MCF 10A (cell line): ENCODE measurements at regions of chr6 and their contacts with region 1.

Region 1: DNA sequence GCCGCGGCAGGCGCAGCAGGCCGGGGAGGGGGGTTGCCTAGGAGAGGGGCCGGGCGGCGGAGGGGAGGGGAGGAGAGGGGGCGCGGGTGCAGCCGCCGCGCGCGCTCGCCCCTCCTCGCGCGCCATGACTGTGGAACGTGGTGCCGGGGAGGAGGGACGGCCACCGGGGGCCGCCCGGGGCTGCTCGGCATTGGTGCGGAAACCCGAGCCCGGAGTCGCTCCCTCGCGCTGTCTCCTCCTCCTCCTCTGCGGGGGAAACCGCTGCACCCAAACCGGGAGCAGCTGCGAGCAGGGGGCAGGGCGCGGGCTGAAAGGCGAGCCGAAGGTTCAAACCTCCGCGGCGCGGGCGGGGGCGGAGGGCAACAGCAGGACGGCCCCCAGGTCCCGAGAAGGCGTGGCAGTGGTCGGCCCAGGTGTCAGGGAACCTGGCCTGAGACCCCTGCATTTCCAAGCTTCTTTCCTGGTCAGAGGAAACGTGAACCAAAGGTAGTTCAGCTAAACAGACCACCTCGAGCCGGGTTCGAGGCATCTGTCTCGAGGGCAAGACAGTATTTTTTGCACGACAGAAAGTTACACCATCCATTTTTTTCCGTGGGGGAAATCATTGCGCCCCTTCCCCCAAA is 1.4 kb upstream of the TRERF1 start:
- DNase-seq: peak; percentile 87
- H3K4me3 Mint-ChIP-seq: peak overlapping the region; percentile 91
- H3K27ac Mint-ChIP-seq: no peak overlapping the region
- H3K4me1 Mint-ChIP-seq: peaks cover 32% of the 10 kb centered on the region
- H3K27me3 Mint-ChIP-seq: no peaks in the 10 kb centered on the region
- CTCF ChIP-seq: no peak

Region 2: GRCh38 chr6:42224222-42224989 is 228.7 kb before region 1 on chr6:
- CTCF ChIA-PET with region 1: no interaction called
- POLR2A ChIA-PET with region 1: interaction called, 41 read pairs
- intact Hi-C with region 1: no loop called
- DNase-seq: peak; percentile 93
- H3K4me3 Mint-ChIP-seq: peak overlapping the region; percentile 73
- H3K27ac Mint-ChIP-seq: peak overlapping the region; percentile 92
- H3K4me1 Mint-ChIP-seq: peaks cover 44% of the 10 kb centered on the region
- H3K27me3 Mint-ChIP-seq: no peaks in the 10 kb centered on the region
- CTCF ChIP-seq: no peak

Region 3: DNA sequence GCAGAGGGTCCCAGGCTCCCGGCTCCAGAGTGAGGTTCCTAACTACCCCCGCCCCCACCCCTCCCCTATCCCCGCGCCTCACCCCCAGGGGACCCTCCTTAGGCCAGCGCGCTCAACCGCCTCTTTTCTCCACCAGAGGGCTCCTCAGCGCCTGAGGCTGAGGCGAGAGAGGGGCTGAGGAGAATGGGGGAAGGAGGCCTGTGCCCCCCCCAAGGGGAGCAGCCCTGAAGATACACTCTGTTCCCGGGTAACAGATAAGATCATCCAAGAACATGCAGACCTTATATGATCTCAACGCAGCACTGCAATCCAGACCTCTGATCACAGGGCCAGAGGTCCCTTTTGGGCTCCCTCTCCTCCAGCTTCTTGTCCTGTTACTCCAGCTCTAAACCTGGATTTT is 192.2 kb before region 1 on chr6:
- CTCF ChIA-PET with region 1: no interaction called
- POLR2A ChIA-PET with region 1: interaction called, 3 read pairs
- intact Hi-C with region 1: loop called (anchors 1 kb)
- DNase-seq: peak; percentile 26
- H3K4me3 Mint-ChIP-seq: no peak overlapping the region
- H3K27ac Mint-ChIP-seq: peak overlapping the region; percentile 70
- H3K4me1 Mint-ChIP-seq: peaks cover 9% of the 10 kb centered on the region
- H3K27me3 Mint-ChIP-seq: no peaks in the 10 kb centered on the region
- CTCF ChIP-seq: peak; percentile 70

Region 4: DNA sequence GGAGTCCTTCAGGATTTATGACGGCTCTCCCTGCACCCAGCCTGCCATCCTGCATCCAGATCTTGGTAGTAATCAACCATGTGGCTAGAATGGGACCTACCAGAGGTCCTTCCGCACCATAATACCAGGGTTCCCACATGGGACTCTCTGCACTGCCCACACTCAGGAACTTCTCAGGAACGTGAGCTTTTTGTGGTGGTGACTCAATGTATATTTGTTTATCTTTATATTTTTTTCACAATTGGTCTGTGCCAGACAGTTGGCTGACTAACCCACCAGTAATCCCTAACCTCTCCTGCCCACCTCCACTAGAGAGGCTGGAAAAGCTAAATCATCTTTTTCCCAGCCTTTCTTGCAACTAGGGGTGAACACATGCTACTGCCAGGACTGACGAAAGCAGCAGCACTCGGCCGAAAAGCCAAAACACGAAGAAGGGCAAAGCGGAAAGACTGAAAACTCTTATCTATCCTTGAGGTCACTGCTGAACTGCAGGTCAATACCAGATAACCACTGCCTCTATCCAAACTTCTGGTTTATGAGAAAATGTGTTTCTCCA is 114.4 kb before region 1 on chr6:
- CTCF ChIA-PET with region 1: no interaction called
- POLR2A ChIA-PET with region 1: interaction called, 16 read pairs
- intact Hi-C with region 1: loop called (anchors 2 kb)
- DNase-seq: peak; percentile 97
- H3K4me3 Mint-ChIP-seq: peak overlapping the region; percentile 61
- H3K27ac Mint-ChIP-seq: peak overlapping the region; percentile 55
- H3K4me1 Mint-ChIP-seq: peaks cover 52% of the 10 kb centered on the region
- H3K27me3 Mint-ChIP-seq: no peaks in the 10 kb centered on the region
- CTCF ChIP-seq: no peak

Region 5: GRCh38 chr6:42563697-42564505 is 110.8 kb after region 1 on chr6 and contains the start of gene UBR2:
- CTCF ChIA-PET with region 1: no interaction called
- POLR2A ChIA-PET with region 1: interaction called, 39 read pairs
- intact Hi-C with region 1: no loop called
- DNase-seq: peak; percentile 99
- H3K4me3 Mint-ChIP-seq: peak within 1 kb of the TSS; percentile 79
- H3K27ac Mint-ChIP-seq: peak within 1 kb of the TSS; percentile 81
- H3K4me1 Mint-ChIP-seq: peaks cover 18% of the 10 kb centered on the region
- H3K27me3 Mint-ChIP-seq: no peaks in the 10 kb centered on the region
- CTCF ChIP-seq: no peak
- total RNA-seq, gene UBR2: 20.1 and 23.2 TPM in 2 replicates